Lower leg skin (tissue), 4 donors: ENCODE measurements at regions of chr1 and their contacts with region 1.

Region 1: DNA sequence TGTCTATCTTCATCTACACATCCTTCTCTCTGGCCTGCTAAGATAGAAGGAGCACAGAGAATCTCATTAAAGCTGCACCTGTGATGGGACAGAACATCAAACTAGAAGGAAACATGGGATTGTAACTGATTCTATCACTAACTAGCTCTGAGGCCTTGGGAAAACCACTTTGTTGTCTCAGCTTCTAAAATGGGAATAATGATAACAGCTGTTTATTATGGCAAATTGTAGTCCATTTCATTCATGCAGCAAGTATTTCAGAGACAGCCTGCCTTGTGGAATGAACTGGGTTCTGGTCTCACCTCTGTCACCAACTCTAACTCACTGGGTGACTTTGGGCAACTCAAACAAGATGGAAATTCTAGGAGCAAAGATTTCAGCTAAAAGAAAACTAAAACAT is 12.4 kb downstream of the GJA5 start:
- DNase-seq: no peak
- H3K4me3 ChIP-seq: no peak overlapping the region
- CTCF ChIP-seq: no peak
- POLR2A ChIP-seq: no peak

Region 2: DNA sequence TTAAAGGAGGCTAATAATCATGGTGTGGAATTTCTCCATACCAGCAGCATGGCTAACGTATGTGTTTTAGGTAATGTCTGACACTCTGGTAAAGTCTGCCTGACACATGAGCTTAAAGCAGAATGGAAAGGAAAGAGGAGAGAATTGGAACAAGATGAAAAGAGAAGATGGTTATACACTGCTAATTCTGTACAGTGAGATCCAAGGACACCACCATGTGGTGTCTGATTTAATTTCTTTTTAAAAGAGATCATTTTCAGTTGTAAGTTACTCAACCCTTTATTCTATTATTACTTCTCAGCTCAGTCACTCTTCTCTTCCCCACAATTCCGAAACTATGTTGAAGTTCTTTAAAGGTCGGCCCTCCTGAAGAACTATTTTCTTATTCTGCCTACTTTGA is 591.3 kb before region 1 on chr1:
- intact Hi-C with region 1: no loop called
- DNase-seq: no peak
- H3K4me3 ChIP-seq: no peak overlapping the region
- CTCF ChIP-seq: no peak
- POLR2A ChIP-seq: no peak

Region 3: DNA sequence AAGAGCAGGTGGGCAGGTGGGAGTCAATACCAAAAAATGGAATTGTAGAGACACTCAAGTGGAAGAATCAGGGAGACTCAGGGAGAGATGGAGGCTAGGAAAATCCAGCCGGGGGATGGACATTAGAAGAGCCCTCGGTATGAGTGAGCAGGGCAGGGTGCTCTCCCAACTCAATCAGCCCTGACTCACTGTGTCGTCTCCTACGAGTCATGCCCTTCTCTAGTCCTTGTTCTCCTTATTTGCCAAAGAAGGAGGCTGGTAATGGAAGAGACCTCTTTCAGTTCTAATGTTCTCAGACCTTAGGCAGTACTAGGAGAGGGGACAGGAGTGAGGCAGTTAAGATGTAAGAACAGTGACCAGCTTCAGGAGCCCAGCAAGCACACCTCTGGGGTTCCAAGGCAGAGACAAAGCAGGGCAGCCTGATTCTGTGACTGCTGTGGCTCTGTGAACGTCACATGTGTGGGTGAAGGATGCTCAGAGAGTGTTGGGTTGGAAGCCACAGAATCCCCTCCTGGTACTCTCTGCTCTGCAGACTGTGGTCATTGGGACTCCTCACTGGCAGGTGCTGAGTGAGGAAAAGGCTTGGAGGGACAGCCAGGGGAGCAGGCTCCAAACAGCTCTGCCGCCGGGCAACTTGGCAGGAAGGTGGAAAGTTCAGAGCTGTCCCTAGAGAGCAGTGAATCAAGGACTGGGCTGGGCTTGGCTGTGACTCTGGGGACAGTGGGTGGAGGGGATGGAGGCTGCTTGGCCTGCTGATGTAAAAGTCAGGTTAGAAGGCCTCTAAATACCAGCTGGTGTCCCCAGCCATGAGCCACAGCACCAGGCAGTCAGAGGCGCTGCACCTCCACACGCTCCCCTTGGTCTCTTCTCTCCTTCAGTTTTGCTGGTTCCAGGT is 23.5 kb after region 1 on chr1:
- intact Hi-C with region 1: loop called (anchors 2 kb)
- DNase-seq: no peak
- H3K4me3 ChIP-seq: no peak overlapping the region
- CTCF ChIP-seq: no peak
- POLR2A ChIP-seq: no peak